GM13977 (cell line): ENCODE measurements at regions of chr5 and their contacts with region 1.

Region 1: GRCh38 chr5:126656396-126657007 is 55.8 kb downstream of the PHAX start:
- DNase-seq: peak; percentile 52
- CTCF ChIP-seq: peak; percentile 86

Region 2: GRCh38 chr5:127030259-127031146 is 374.0 kb after region 1 on chr5 and contains the start of gene MARCHF3:
- in situ Hi-C with region 1: loop called (anchors 25 kb)
- DNase-seq: peak; percentile 98
- CTCF ChIP-seq: no peak

Region 3: GRCh38 chr5:127313847-127314473 is 657.5 kb after region 1 on chr5:
- in situ Hi-C with region 1: loop called (anchors 25 kb)
- DNase-seq: peak; percentile 53
- CTCF ChIP-seq: peak; percentile 90

Region 4: GRCh38 chr5:127517480-127518318 is 861.2 kb after region 1 on chr5 and contains the start of gene PRRC1:
- in situ Hi-C with region 1: loop called (anchors 25 kb)
- DNase-seq: peak; percentile 92
- CTCF ChIP-seq: no peak